ENCODE measurements at regions of chr3 and their contacts with region 1.

Region 1: GRCh38 chr3:177057768-177058167 is 139.5 kb downstream of the TBL1XR1 start:
- DNase-seq: no peak
- ATAC-seq: peak; percentile 92

Region 2: GRCh38 chr3:176739159-176739558 is 318.6 kb before region 1 on chr3:
- intact Hi-C with region 1: no loop called
- DNase-seq: no peak
- ATAC-seq: peak; percentile 67

Region 3: DNA sequence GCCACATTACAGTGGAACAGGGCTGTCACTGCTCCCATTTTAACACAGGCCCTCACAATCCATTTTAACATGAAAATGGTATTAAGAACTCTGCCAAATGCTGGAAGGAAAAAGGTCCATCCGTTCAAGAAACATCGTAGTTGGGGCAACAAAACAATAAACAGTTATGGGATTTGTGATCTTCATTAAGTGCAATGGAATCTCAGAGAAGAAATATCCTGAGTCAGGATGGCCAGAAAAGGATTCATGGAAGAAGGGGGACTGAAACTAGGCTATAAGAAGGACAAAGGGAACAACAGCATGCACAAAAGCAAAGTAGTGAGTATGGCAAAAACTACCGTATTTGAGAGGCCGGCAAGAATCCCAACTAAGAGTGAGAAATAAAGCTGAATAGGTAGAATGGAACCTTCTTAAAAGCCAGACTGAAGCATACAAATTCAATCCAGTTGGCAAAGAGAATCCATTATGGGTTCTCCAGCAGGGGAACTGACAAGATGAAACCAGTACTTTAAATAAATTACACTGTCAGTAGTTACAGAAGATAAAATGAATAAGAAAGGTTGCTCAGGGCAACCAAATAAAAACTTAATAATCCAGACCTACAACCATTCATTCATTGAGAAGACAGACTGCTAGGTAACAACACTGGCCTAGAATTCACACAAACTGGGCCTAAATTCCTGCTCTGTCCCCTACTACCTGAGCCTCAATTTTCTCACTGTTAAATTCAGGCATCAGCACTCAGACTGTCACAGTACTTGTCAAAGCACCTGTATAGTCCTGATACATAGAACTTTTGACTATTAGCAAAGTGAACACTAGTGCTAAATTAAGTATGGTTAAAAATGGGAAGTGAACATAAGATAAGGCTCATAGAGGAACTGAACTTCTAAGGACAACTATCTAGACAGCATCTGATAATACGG is 133.3 kb after region 1 on chr3:
- intact Hi-C with region 1: loop called (anchors 5 to 10 kb)
- DNase-seq: no peak
- ATAC-seq: no peak

Region 4: DNA sequence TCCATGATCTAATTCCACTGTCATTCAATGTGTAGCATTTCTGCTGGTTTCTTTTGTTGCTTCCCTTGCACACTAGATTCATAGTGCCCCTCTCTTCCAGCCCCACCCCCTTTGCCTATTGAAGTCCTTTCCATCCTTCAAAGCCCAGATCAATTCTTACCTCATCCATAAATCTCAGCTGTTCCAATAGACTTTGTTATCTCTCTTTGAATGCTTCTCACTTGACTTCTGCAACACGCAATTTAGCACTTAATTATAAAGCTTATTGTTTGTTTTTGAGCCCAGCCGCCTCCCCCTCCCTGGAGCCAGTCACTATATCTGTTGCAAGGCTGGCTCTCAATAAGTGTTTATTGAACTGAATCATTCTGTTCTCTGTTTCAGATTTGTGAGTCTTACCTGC is 314.1 kb after region 1 on chr3:
- intact Hi-C with region 1: no loop called
- DNase-seq: no peak
- ATAC-seq: no peak

Measured in left colon (tissue), 2 donors.